ENCODE measurements at regions of chr10 and their contacts with region 1.

Region 1: GRCh38 chr10:103685880-103686669 is 169.3 kb downstream of the SH3PXD2A start:
- DNase-seq: peak; percentile 88
- H3K4me3 ChIP-seq: no peak overlapping the region
- H3K27ac ChIP-seq: peak overlapping the region in 1 of 2 donors; percentile 7
- H3K4me1 ChIP-seq: peaks cover 0 to 11% (median 4%) of the 10 kb centered on the region in 4 donors
- H3K27me3 ChIP-seq: no peaks in the 10 kb centered on the region
- CTCF ChIP-seq: peak; percentile 96 to 98

Region 2: GRCh38 chr10:103491493-103492381 is 194.3 kb before region 1 on chr10:
- intact Hi-C with region 1: no loop called
- DNase-seq: no peak
- H3K4me3 ChIP-seq: no peak overlapping the region
- H3K27ac ChIP-seq: no peak overlapping the region
- H3K4me1 ChIP-seq: peaks cover 0 to 17% (median 15%) of the 10 kb centered on the region in 4 donors
- H3K27me3 ChIP-seq: peaks cover 0 to 46% of the 10 kb centered on the region in 2 donors
- CTCF ChIP-seq: no peak

Region 3: GRCh38 chr10:103605359-103606095 is 80.5 kb before region 1 on chr10:
- intact Hi-C with region 1: loop called (anchors 2 kb)
- DNase-seq: peak; percentile 65 to 86
- H3K4me3 ChIP-seq: no peak overlapping the region
- H3K27ac ChIP-seq: no peak overlapping the region
- H3K4me1 ChIP-seq: peaks cover 0 to 19% (median 15%) of the 10 kb centered on the region in 4 donors
- H3K27me3 ChIP-seq: no peaks in the 10 kb centered on the region
- CTCF ChIP-seq: peak; percentile 81 to 95

Measured in tibial artery (tissue), 4 donors.